ENCODE measurements at regions of chr4 and their contacts with region 1.

Region 1: GRCh38 chr4:72326692-72327632 is 242.1 kb downstream of the ADAMTS3 start:
- DNase-seq: no peak
- H3K4me3 ChIP-seq: no peak overlapping the region
- H3K27ac ChIP-seq: no peak overlapping the region
- H3K4me1 ChIP-seq: peaks cover 9% of the 10 kb centered on the region
- H3K27me3 ChIP-seq: no peaks in the 10 kb centered on the region
- CTCF ChIP-seq: peak in 3 of 4 experiments; percentile 55 to 65 (median 58)
- POLR2A ChIP-seq: no peak

Region 2: GRCh38 chr4:71913275-71913674 is 413.7 kb before region 1 on chr4:
- intact Hi-C with region 1: no loop called
- DNase-seq: no peak
- H3K4me3 ChIP-seq: no peak overlapping the region
- H3K27ac ChIP-seq: no peak overlapping the region
- H3K4me1 ChIP-seq: no peaks in the 10 kb centered on the region
- H3K27me3 ChIP-seq: no peaks in the 10 kb centered on the region
- CTCF ChIP-seq: no peak
- POLR2A ChIP-seq: no peak

Region 3: DNA sequence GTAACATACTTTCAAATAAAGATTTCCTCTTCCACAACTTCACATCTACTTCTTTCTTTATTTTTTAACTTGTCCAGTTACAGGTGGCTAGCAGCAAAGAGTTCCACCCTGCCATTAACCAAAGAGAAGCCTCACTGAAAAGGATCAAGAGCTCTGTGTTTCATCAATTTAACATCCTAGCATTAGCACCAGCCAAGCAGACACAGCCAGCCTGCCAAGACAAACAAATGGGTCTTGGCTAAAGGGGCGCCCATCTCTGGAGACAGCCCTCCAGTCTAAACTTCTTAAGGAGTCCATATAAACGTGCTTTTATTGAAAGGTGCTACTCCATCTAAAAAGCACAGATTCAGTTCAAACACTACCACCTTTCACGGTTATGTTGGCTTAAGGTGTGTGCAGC is 136.8 kb after region 1 on chr4:
- intact Hi-C with region 1: loop called (anchors 2 kb)
- DNase-seq: no peak
- H3K4me3 ChIP-seq: no peak overlapping the region
- H3K27ac ChIP-seq: no peak overlapping the region
- H3K4me1 ChIP-seq: no peaks in the 10 kb centered on the region
- H3K27me3 ChIP-seq: no peaks in the 10 kb centered on the region
- CTCF ChIP-seq: no peak
- POLR2A ChIP-seq: no peak

Region 4: DNA sequence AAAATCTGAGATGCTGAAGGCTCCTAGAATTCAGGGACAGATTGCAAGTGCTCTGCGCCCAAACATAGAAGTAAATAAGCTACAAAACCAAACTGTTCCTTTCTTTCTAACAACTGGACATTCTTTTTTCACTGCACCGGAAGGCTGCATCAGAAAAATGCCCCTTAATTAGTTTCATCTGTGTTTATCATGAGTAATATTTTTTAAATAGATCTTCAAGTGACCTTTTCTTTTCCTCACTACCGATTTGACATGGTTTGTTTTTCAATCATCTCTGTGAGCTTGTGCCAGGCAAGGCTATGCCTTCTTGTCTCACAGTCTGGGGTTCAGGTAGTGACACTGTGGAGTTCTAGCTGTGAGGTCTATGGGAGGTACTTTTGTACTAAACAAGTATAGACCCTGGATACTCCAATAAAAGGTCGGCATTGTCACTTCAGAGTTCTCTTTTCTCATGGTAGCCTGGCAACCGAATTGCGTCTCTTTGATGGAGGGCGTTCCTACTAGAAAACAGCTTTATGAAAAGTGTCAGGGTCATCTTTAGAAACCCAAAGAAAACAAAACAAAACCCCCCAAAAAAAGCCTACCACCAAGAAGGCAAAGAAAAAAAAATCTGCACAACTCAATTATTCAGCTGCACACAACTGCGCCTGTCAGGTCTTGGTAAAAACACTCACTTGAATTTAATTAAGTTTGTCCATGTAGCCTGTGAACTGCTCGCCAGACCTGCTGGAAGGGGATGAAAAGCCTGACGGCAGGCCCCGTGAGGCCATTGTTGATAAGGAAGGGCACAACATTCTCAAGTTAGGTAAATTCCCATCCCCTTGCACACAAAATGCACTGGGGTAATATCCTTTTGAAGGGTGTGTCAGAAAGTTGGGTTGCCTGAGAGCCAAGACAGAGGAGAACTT is 264.8 kb after region 1 on chr4:
- intact Hi-C with region 1: no loop called
- DNase-seq: no peak
- H3K4me3 ChIP-seq: no peak overlapping the region
- H3K27ac ChIP-seq: no peak overlapping the region
- H3K4me1 ChIP-seq: no peaks in the 10 kb centered on the region
- H3K27me3 ChIP-seq: no peaks in the 10 kb centered on the region
- CTCF ChIP-seq: no peak
- POLR2A ChIP-seq: no peak